Uterus (tissue), 4 donors: ENCODE measurements at regions of chr6 and their contacts with region 1.

Region 1: DNA sequence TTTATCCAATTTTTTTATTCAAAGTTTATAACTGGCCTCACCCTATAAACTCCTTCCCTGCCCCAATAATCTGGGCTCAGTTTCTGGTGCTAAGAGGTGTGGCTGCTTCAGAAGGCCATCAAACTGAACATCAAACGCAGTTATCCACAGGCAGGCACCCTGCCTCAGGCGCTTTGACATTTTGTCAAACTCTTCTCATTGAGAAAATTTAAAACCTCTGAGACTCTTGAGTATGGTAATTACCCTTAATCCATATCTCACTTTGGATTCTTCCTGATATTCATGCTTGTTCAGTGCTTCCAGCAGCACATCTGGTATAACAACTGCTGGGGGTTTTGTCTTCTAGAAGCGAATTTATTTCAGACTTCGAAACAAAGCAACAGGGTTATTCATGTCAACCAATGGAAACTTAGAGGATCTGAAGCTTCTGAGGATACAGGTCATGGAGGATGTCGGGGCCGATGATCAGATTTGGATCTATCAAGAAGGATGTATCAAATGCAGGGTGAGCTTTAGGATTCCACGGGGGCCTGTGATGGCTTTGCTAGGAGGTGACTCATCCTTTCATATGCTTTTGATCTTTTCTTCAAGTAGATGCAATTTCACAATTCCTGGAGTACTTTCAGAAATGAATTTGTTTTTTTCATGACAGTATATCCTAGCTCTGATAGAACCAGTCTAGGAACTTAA is 68.2 kb downstream of the RTN4IP1 start:
- DNase-seq: no peak
- H3K4me3 ChIP-seq: no peak overlapping the region
- H3K27ac ChIP-seq: no peak overlapping the region
- H3K4me1 ChIP-seq: no peaks in the 10 kb centered on the region
- H3K27me3 ChIP-seq: no peaks in the 10 kb centered on the region
- CTCF ChIP-seq: no peak
- POLR2A ChIP-seq: no peak

Region 2: DNA sequence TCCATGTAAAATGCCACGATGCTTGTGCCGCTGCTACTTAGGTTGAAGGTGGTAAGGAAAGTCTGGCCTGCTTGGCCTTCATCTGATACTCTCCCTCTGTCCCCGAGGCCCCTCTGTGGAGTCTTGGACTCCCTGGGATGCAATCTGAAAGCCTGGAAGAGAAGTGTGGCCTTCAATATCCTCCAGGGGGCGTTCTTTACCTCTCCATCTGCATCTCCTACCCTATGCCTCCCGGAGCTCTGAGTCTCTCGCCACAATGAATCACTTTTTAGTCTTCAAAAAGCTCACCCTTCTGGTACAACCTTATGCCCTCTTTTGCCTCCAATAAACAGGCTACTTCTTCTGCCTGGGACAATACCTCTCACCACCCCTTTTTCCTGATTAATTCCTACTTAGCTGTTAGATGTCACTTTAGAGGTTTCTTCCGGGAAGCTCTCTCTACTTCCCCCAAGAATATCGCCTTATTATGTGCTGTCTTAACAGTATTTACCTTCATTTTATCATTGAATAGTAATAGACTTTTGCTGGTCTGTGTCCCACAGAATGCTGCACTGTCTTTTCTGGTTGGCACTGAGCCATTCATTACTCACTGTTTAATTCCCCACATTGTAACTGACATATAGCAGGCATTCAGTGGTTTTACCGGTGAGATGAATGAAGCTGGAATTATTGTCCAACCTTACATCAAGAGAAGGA is 221.7 kb before region 1 on chr6:
- intact Hi-C with region 1: loop called (anchors 10 kb)
- DNase-seq: peak in 1 of 2 donors; percentile 28
- H3K4me3 ChIP-seq: no peak overlapping the region
- H3K27ac ChIP-seq: no peak overlapping the region
- H3K4me1 ChIP-seq: no peaks in the 10 kb centered on the region
- H3K27me3 ChIP-seq: no peaks in the 10 kb centered on the region
- CTCF ChIP-seq: peak; percentile 34 to 64 (median 42)
- POLR2A ChIP-seq: no peak

Region 3: GRCh38 chr6:106444777-106445507 is 116.2 kb before region 1 on chr6:
- intact Hi-C with region 1: loop called (anchors 10 kb)
- DNase-seq: no peak
- H3K4me3 ChIP-seq: no peak overlapping the region
- H3K27ac ChIP-seq: no peak overlapping the region
- H3K4me1 ChIP-seq: no peaks in the 10 kb centered on the region
- H3K27me3 ChIP-seq: no peaks in the 10 kb centered on the region
- CTCF ChIP-seq: peak; percentile 41 to 63 (median 50)
- POLR2A ChIP-seq: no peak